Right ventricle myocardium inferior (tissue), 1 donor: ENCODE measurements at regions of chr2 and their contacts with region 1.

Region 1: DNA sequence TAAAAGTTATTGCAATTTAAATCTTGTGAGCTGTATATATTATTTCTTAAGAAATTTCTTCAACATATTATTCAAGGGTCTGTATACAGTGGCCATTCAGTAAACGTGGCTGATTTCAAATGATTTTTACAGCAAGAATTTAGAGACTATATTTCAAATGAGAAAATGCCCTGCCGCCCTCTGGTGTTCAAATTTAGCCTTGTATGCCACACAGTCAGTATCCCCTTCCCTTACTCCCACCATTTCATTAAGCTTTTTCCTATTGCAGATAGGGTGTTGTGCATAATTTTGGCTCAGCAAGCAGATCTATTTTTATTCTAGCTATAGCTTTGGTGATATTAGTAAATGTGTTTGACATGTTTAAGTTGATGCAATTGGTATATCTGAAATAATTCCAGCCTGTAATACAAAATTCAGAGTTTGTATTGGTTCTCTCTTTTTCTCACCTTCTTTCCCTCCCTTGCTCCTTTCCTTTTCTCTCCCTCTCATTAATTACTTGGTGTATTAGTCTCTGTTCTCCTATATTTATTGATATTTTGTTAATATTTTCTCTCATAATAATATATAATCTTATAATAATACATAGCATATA is 22.8 kb upstream of the SCN7A start:
- DNase-seq: no peak
- ATAC-seq: peak; percentile 59

Region 2: DNA sequence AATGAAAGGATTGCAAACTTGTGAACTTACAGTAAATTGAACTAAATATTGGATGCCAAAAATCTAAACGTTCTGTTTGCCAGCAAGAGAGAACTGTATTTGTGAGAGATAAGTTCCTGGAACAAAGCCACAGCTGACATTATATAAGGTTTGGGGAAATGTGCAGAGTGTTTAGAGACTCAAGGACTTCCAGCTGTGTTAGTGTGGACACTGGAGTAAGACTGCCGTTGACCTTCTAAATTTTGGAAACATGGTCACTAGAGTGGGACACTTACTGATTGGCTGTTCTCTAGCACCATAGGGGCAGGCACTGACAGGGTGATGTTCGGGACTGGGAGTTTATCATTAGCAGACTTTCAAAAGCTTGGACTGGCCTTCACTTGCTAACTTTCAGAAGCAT is 181.5 kb before region 1 on chr2:
- intact Hi-C with region 1: no loop called
- DNase-seq: no peak
- ATAC-seq: no peak

Region 3: DNA sequence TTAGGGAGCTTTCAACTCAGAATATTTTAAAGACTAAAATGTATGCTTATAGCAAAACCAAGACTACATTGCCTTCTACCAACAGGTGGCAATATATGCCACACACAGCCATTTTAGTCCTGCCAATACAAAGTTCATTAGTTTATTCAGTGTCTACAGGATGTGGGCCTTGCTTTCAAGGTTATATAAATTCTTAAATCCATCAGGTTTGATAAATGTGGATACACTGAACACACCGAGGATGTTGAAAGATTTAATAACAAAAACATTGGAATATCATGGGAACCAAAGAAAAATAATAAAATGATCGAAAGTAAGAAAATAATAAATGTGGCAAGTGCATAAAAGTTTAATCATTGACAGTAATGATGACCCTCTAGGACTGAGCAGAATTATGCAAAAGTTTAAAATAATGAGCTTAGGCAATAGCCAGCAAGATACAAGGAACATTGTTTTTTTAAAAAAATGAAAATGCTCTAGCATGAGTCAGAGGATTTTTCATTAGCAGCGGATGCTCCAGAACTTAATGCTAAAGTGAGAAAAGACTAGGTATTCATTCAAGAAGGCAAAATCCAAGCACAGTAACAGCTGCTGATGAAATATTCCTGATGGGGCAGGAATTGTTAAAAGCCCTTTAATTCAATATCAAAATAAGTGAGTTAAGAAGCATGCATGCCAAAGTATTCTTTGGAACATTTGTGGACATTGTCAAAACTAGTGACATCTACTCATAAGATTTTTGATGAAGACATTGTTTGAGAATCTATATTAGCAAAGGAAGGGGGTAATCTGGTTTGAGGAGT is 155.3 kb before region 1 on chr2:
- intact Hi-C with region 1: loop called (anchors 5 kb)
- DNase-seq: no peak
- ATAC-seq: no peak

Region 4: GRCh38 chr2:166417669-166418068 is 99.1 kb before region 1 on chr2:
- intact Hi-C with region 1: loop called (anchors 10 kb)
- DNase-seq: no peak
- ATAC-seq: no peak